ENCODE measurements at regions of chr12 and their contacts with region 1.

Region 1: DNA sequence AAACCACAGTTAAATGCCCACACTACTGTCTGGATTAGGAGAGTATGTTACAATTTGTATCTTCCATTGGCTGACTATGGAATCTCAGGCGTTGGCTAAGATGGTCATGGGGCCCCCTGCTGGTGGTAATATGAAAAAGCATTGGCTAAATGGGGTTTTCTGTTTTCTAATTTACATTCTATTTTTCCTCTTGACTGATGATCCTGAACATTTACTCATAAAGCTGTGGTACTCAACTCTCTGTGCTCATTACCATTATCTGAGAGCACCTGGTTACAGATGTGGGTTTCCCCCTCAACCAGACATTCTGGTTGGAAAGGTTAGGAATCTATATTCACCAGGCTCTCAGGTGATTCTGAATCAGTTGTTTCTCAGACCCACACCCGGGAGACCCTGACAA is 64.8 kb downstream of the WSCD2 start:
- H3K4me3 Mint-ChIP-seq: no peak overlapping the region
- H3K27ac Mint-ChIP-seq: no peak overlapping the region
- H3K4me1 Mint-ChIP-seq: no peaks in the 10 kb centered on the region
- H3K27me3 Mint-ChIP-seq: peaks cover 9% of the 10 kb centered on the region

Region 2: GRCh38 chr12:107992870-107993451 is 201.0 kb before region 1 on chr12:
- intact Hi-C with region 1: loop called (anchors 5 kb)
- H3K4me3 Mint-ChIP-seq: no peak overlapping the region
- H3K27ac Mint-ChIP-seq: no peak overlapping the region
- H3K4me1 Mint-ChIP-seq: no peaks in the 10 kb centered on the region
- H3K27me3 Mint-ChIP-seq: peaks cover 28% of the 10 kb centered on the region

Region 3: GRCh38 chr12:108099073-108099472 is 94.8 kb before region 1 on chr12:
- intact Hi-C with region 1: loop called (anchors 1 kb)
- H3K4me3 Mint-ChIP-seq: no peak overlapping the region
- H3K27ac Mint-ChIP-seq: no peak overlapping the region
- H3K4me1 Mint-ChIP-seq: no peaks in the 10 kb centered on the region
- H3K27me3 Mint-ChIP-seq: peaks cover 22% of the 10 kb centered on the region

Measured in dendritic cell treated with granulocyte-macrophage colony-stimulating factor and Interleukin-4, amounts not matched to agents 40 ng/mL and 50 ng/mL, for 4 days (primary cell).